Activated T-helper 1 cell treated with anti-CD3 and anti-CD28 coated beads, Interleukin-12 subunit alpha, Interleukin-12 subunit beta, Interleukin-2, Interleukin-4 antibody, amounts not matched to agents 30 ng/mL and 10 ng/mL and 1 ng/mL, durations not matched to agents 14 hours and 24 hours and 36 hours (primary cell): ENCODE measurements at regions of chr7 and their contacts with region 1.

Region 1: GRCh38 chr7:75599244-75599781 is 107.2 kb downstream of the SPDYE5 start:
- DNase-seq: no peak
- H3K4me3 Mint-ChIP-seq: no peak overlapping the region
- H3K27ac Mint-ChIP-seq: no peak overlapping the region
- H3K4me1 Mint-ChIP-seq: peaks cover 11% of the 10 kb centered on the region
- H3K27me3 Mint-ChIP-seq: peaks cover 1% of the 10 kb centered on the region

Region 2: GRCh38 chr7:75776295-75776971 is 177.1 kb after region 1 on chr7:
- intact Hi-C with region 1: loop called (anchors 5 kb)
- DNase-seq: peak; percentile 24
- H3K4me3 Mint-ChIP-seq: peak overlapping the region; percentile 26
- H3K27ac Mint-ChIP-seq: peak overlapping the region; percentile 83
- H3K4me1 Mint-ChIP-seq: peaks cover 31% of the 10 kb centered on the region
- H3K27me3 Mint-ChIP-seq: peaks cover 2% of the 10 kb centered on the region